Dorsolateral prefrontal cortex (tissue), 120 donors: ENCODE measurements at regions of chr16 and their contacts with region 1.

Region 1: GRCh38 chr16:26569793-26570192 is 496.9 kb upstream of the C16orf82 start:
- DNase-seq: peak in 2 of 10 donors; percentile 5 to 26
- H3K4me3 ChIP-seq: no peak overlapping the region
- H3K27ac ChIP-seq: no peak overlapping the region
- H3K27me3 ChIP-seq: peaks cover 0 to 17% (median 0%) of the 10 kb centered on the region in 45 donors
- CTCF ChIP-seq: peak in 52 of 56 donors; percentile 27 to 69 (median 52)

Region 2: GRCh38 chr16:25838724-25839186 is 731.0 kb before region 1 on chr16:
- intact Hi-C with region 1: loop called in 1 of 2 experiments (anchors 10 kb)
- DNase-seq: peak in 2 of 10 donors; percentile 6 to 36
- H3K4me3 ChIP-seq: peak overlapping the region in 19 of 59 donors; percentile 3 to 49 (median 25)
- H3K27ac ChIP-seq: no peak overlapping the region
- H3K27me3 ChIP-seq: no peaks in the 10 kb centered on the region
- CTCF ChIP-seq: peak; percentile 70 to 90 (median 82)

Region 3: DNA sequence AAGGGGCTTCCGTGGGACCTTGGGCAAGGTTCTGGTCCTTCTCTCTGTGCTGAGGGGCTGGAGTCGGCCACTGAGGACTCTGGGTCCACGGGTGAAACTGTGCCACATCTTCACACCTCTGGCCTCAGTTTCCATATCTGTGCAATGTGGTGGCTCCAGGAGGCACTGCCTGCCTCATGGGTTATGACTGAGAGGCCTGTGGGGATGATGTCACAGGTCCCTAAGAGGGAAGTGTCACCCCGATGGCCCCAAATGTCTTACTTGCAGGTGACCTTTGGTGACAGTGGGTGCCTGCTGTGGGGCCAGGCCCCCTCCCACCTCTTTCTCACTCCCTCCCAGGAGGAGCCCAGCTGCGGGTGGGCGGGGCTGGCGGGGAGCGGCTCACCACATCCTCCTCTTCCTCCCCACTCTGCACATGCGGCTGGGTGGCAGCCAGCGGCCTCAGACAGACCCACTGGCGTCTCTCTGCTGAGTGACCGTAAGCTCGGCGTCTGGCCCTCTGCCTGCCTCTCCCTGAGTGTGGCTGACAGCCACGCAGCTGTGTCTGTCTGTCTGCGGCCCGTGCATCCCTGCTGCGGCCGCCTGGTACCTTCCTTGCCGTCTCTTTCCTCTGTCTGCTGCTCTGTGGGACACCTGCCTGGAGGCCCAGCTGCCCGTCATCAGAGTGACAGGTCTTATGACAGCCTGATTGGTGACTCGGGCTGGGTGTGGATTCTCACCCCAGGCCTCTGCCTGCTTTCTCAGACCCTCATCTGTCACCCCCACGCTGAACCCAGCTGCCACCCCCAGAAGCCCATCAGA is 832.2 kb after region 1 on chr16 and contains the start of gene IL21R:
- intact Hi-C with region 1: no loop called
- DNase-seq: peak in 3 of 10 donors; percentile 10 to 47 (median 22)
- H3K4me3 ChIP-seq: peak within 1 kb of the TSS in 17 of 59 donors; percentile 3 to 40 (median 21)
- H3K27ac ChIP-seq: no peak within 1 kb of the TSS
- H3K27me3 ChIP-seq: peaks cover 0 to 25% (median 4%) of the 10 kb centered on the region in 45 donors
- CTCF ChIP-seq: no peak
- total RNA-seq, gene IL21R: 0.11 to 4.6 (median 0.63) TPM in 99 of 120 experiments, not detected in the others